Activated CD4-positive, alpha-beta T cell treated with anti-CD3 and anti-CD28 coated beads, Interleukin-2, amount 10 ng/mL, durations not matched to agents 24 days and 14 days (primary cell): ENCODE measurements at regions of chr12 and their contacts with region 1.

Region 1: GRCh38 chr12:69470189-69471075 is at the start of gene FRS2:
- DNase-seq: peak; percentile 95
- H3K4me3 Mint-ChIP-seq: peak within 1 kb of the TSS; percentile 98
- H3K27ac Mint-ChIP-seq: peak within 1 kb of the TSS; percentile 98
- H3K4me1 Mint-ChIP-seq: peaks cover 39% of the 10 kb centered on the region
- H3K27me3 Mint-ChIP-seq: no peaks in the 10 kb centered on the region
- total RNA-seq, gene FRS2: 12.1 and 13.6 TPM in 2 replicates

Region 2: DNA sequence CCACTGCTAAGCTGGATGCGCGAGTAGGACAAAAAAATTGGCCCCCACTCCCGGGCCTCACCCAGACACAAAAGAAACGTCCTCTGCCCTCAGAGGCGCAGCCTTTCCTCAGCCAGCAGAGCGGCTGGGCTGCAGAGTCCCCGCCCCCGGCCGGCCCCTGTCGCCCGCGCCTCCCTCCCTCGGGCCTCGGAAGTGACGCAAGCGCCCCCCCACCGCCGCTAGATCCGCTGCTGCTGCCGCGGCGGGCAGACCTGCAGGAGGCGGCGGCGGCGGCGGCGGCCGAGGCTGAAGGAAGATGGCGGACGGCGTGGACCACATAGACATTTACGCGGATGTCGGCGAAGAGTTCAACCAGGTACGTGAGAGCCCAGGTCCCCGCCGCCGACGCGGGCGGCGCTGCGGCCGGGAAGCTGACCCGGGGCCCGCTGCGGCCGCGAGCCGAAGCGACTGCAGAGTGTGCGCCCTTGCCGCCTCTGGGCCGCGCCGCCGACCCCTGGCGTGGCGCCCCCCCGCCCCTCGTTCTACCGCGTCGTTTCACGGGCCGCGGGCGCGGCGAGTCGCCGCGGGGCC is 231.0 kb before region 1 on chr12 and contains the start of gene CPSF6:
- intact Hi-C with region 1: loop called (anchors 2 kb)
- DNase-seq: peak; percentile 99
- H3K4me3 Mint-ChIP-seq: peak within 1 kb of the TSS; percentile 97
- H3K27ac Mint-ChIP-seq: peak within 1 kb of the TSS; percentile 98
- H3K4me1 Mint-ChIP-seq: peaks cover 43% of the 10 kb centered on the region
- H3K27me3 Mint-ChIP-seq: no peaks in the 10 kb centered on the region
- total RNA-seq, gene CPSF6: 114 and 121 TPM in 2 replicates

Region 3: DNA sequence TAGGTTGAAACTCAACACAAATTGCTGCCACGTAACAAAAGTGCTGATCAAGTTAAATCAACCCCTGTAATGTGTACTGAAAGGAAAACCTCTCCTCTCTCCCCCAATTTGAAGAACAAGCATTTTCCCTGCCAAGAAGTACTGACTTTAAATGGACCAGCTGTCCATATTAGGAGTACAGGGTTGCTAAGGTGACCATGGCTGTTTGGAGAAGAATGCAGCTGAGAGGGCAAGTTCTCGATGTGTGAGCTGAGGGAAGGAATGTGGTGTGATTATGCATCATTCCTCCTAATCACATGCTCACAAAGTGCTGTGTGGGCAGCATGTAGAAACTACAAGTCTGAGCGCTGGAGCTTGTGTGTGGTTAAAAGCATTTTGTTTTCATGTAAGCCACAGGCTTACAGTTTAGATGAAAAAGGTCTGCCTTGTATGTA is 64.0 kb after region 1 on chr12:
- intact Hi-C with region 1: loop called (anchors 2 kb)
- DNase-seq: peak; percentile 78
- H3K4me3 Mint-ChIP-seq: peak overlapping the region; percentile 27
- H3K27ac Mint-ChIP-seq: peak overlapping the region; percentile 76
- H3K4me1 Mint-ChIP-seq: peaks cover 15% of the 10 kb centered on the region
- H3K27me3 Mint-ChIP-seq: no peaks in the 10 kb centered on the region

Region 4: GRCh38 chr12:69570545-69571399 is 100.3 kb after region 1 on chr12:
- intact Hi-C with region 1: loop called (anchors 5 kb)
- DNase-seq: peak; percentile 86
- H3K4me3 Mint-ChIP-seq: no peak overlapping the region
- H3K27ac Mint-ChIP-seq: no peak overlapping the region
- H3K4me1 Mint-ChIP-seq: peaks cover 12% of the 10 kb centered on the region
- H3K27me3 Mint-ChIP-seq: no peaks in the 10 kb centered on the region

Region 5: GRCh38 chr12:69585189-69586062 is 115.0 kb after region 1 on chr12 and contains the start of gene CCT2:
- intact Hi-C with region 1: loop called (anchors 1 kb)
- DNase-seq: peak; percentile 99
- H3K4me3 Mint-ChIP-seq: peak within 1 kb of the TSS; percentile 99
- H3K27ac Mint-ChIP-seq: peak within 1 kb of the TSS; percentile 99
- H3K4me1 Mint-ChIP-seq: peaks cover 14% of the 10 kb centered on the region
- H3K27me3 Mint-ChIP-seq: no peaks in the 10 kb centered on the region
- total RNA-seq, gene CCT2: 490 and 511 TPM in 2 replicates

Region 6: GRCh38 chr12:69639400-69640016 is 169.1 kb after region 1 on chr12:
- intact Hi-C with region 1: loop called (anchors 5 kb)
- DNase-seq: peak; percentile 88
- H3K4me3 Mint-ChIP-seq: no peak overlapping the region
- H3K27ac Mint-ChIP-seq: no peak overlapping the region
- H3K4me1 Mint-ChIP-seq: peaks cover 2% of the 10 kb centered on the region
- H3K27me3 Mint-ChIP-seq: peaks cover 2% of the 10 kb centered on the region

Region 7: GRCh38 chr12:69738351-69739286 is 268.2 kb after region 1 on chr12 and contains the start of gene RAB3IP:
- intact Hi-C with region 1: loop called (anchors 1 kb)
- DNase-seq: peak; percentile 97
- H3K4me3 Mint-ChIP-seq: peak within 1 kb of the TSS; percentile 86
- H3K27ac Mint-ChIP-seq: peak within 1 kb of the TSS; percentile 76
- H3K4me1 Mint-ChIP-seq: peaks cover 15% of the 10 kb centered on the region
- H3K27me3 Mint-ChIP-seq: peaks cover 33% of the 10 kb centered on the region
- total RNA-seq, gene RAB3IP: 28.5 and 33.6 TPM in 2 replicates